HEK293 (cell line): ENCODE measurements at regions of chr2 and their contacts with region 1.

Region 1: DNA sequence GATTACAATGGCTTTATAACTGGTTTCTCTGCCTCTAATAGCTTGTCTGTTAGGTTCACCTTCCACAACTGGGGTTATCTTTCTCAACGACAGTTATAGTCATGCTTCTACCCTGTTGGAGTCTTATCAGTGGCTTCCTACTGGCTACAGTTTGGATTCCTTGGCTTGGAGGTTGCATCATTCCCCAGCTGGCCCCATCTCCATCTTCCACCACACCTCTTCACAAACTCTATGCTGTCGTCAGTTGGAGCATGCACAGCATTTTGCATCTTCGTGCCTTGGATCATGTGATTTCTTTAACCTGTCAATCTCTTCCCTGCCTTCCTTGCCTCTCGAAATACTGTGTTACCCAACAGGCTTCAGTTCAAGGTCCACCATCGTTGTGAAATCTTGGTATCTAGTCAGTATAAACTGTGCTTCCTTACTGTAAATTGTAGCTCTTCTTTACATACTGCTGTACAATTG is 316.3 kb upstream of the CXCR4 start:
- H3K4me3 ChIP-seq: no peak overlapping the region
- H3K27ac ChIP-seq: no peak overlapping the region
- H3K4me1 ChIP-seq: no peaks in the 10 kb centered on the region
- CTCF ChIP-seq: no peak

Region 2: GRCh38 chr2:136423516-136423996 is 10.7 kb before region 1 on chr2:
- CTCF ChIA-PET with region 1: interaction called, 11 read pairs
- POLR2A ChIA-PET with region 1: no interaction called
- H3K4me3 ChIP-seq: peak overlapping the region; percentile 34
- H3K27ac ChIP-seq: no peak overlapping the region
- H3K4me1 ChIP-seq: no peaks in the 10 kb centered on the region
- CTCF ChIP-seq: peak; percentile 88